Posterior vena cava (tissue), 2 donors: ENCODE measurements at regions of chr6 and their contacts with region 1.

Region 1: DNA sequence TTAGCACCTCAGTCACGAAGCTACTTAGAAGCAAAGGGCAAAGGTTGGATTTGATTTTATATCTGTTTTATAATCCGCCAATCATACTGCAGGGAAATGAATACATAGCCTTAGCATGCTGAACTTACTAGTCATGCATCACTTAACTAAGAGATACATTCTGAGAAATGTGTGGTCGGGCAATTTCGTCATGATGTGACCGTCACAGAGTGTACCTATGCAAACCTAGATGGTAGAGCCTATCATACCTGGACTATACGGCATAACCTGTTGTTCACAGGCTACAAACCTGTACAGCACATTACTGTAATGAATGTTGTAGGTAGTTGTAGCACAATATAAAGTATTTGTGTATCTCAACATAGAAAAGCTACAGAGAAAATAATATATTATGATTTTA is 345.2 kb upstream of the RGS17 start:
- DNase-seq: no peak

Region 2: DNA sequence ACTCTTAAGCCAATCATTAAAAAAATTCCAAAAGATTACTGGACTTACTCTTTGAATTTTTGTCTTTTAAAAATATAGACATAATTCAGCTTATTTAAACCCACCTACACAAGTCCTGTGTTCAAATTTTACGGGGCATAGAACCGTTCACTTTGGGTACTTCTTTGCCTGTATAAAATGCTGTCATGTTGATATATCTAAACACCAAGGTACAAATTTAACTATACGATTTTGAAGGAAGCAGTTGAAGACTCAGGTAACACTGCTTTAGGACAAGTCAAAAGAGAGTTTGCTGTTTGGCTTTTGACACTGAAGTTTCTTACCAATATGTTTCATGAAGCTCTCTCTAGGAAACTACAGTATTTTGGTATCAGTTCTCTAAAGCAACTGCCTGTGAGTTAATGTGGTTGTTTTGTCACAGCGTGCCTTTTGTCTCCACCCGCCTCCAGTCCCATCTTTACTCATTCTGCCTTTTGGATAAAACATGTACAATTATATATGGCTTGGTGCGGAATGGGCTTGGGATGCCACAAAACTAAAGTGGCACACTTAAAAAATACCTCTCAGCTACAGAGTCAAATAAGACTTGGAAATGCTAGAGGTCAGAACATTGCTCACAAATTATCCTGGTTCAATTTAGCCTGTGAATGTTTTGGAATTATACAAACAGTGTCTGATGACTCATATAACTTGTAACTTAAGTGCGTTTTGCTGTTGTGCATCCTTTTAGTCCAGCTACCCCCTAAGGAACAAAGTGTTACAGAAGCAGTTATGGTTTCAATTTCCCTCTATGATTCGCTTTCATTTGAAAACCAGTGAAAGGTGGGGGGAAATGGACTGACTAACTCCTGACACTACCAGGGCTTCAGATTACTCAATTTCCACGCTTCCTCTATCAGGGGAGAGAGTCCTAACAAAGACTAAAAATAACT is 383.9 kb before region 1 on chr6:
- intact Hi-C with region 1: no loop called
- DNase-seq: no peak

Region 3: GRCh38 chr6:153150752-153151440 is 325.3 kb before region 1 on chr6:
- intact Hi-C with region 1: loop called in 1 of 2 experiments (anchors 5 kb)
- DNase-seq: no peak